ENCODE measurements at regions of chr3 and their contacts with region 1.

Region 1: DNA sequence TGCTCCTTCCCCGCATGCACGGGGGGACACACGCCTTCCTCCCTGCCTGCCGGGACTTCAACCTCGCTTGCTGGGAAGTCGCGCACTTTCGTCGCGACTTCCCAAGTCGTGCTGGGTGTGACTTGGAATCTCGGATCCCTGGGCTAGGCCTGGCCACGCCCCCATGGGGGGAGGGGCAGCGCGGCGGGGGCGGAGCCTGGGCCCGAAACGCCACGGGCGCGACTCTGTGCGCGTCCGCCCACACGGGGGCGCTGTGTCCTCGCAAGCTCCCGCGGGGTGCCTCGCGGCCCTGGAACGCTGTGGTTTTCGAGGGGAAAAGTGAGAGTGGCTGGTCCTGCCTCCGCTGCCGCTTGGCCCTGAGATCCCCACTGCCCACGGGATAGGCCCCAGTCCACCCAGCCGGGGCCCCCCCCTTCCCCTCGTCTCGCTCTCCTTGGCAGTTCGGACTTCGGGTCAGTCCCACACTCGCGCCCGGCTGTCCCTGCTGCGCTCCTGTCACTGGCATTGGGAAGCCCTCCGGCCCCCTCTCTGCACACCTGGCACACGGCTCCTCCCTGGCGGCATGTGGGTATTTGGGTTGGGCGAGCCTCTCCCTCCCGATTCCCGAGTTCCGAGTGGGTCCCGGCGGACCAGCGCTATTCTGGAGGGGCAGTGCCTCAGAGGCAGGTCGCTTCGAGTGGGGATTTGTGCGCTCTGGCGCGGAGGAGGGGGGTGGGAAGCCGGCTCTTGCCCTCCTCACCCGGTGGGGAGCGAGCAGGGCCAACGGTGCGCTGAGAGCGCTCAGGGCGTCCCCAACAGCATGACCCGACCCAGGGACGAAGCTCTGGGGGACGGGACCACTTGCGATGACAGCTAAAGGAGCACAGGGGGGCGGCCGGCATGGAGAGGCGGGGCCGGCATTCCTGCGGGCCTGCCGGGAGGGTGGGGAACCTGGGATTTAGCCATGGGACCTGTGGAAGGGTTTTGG is 23.6 kb downstream of the SEC61A1 start:
- DNase-seq: peak; percentile 86
- H3K4me3 Mint-ChIP-seq: peak overlapping the region; percentile 46
- H3K27ac Mint-ChIP-seq: no peak overlapping the region
- H3K4me1 Mint-ChIP-seq: peaks cover 20% of the 10 kb centered on the region
- H3K27me3 Mint-ChIP-seq: no peaks in the 10 kb centered on the region

Region 2: DNA sequence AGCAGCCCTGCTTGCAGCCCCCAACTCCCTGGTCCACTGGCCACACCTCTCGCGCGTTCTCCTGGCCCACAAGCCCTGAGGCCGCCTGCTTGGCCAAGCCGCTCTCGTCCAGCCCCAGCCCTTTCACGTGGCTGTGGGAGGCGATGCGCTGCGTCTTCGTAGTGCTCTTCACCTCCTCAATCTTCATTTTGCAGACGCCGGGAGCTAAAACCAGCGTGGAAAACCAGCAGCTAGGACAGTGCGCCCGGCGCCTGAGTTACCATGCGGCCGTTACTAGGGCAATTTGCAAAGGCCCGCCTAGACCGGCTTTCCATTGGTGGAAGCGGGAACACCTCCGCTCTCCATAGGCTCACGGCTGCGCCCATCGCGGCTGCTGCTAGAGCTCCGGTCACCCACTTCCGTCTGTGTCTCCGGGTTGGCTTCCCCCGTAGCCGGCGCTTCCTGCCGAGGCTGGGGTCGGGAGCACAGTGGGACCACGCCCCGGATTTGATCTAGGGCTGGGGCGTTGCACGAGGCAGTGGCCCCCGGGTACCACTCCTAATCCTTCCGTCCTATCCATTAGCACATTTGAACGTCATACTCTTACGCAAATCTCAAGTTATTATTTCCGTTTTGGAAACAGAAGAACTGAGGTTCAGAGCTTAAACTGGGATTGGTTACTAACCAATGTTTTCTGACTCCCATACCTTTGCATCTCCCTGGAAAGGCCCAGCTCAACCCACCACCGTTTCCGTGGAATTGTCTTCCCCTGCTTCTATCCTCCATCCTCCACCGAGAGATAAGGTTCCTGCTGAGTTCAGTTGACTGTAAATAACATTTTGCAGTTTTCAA is 48.0 kb after region 1 on chr3 and contains the start of gene RUVBL1:
- CTCF ChIA-PET with region 1: interaction called, 3 read pairs
- intact Hi-C with region 1: loop called (anchors 2 kb)
- DNase-seq: peak; percentile 99
- H3K4me3 Mint-ChIP-seq: peak within 1 kb of the TSS; percentile 93
- H3K27ac Mint-ChIP-seq: peak within 1 kb of the TSS; percentile 86
- H3K4me1 Mint-ChIP-seq: peaks cover 29% of the 10 kb centered on the region
- H3K27me3 Mint-ChIP-seq: no peaks in the 10 kb centered on the region
- total RNA-seq, gene RUVBL1: 71.6 to 73.1 TPM

Region 3: DNA sequence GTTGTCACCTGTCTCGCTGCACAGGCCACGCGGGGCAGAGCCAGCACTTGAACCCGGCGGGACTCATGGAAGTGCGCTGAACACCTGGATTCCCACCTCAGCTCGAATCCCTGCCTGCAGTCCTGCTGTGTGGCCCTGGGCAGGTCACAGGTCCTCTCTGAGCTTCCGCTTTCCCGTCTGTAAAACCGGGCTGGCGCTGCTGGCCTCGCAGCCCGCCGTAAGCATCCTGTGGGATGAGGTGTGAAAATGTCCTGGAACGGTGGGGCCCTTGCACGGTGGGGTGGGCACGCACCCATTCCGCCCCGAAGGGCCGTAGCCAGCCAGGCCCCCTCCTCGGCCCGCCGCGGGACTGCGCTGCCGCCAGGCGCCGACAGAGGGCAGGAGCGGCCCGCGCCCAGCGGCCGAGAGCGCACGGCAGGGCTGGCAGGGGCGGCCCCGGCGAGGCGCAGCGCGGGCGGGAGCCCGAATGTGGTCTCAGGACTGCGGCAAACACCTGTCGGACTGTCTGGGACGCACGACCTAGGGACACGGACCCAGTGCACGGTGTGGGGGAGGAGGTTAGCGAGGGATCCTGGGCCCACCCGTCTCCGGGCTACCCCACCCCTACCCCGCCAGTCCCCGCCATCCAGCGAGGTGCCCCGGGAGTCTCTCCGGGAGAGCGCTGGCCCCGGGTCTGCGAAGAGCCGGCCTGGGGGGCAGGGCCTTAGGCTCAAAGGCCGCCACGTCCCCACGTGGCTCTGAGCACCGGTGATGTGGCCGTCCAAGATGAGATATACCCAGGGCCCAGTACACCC is 350.5 kb after region 1 on chr3:
- CTCF ChIA-PET with region 1: no interaction called
- intact Hi-C with region 1: loop called (anchors 5 kb)
- DNase-seq: peak; percentile 56
- H3K4me3 Mint-ChIP-seq: no peak overlapping the region
- H3K27ac Mint-ChIP-seq: no peak overlapping the region
- H3K4me1 Mint-ChIP-seq: no peaks in the 10 kb centered on the region
- H3K27me3 Mint-ChIP-seq: peaks cover 21% of the 10 kb centered on the region

Region 4: DNA sequence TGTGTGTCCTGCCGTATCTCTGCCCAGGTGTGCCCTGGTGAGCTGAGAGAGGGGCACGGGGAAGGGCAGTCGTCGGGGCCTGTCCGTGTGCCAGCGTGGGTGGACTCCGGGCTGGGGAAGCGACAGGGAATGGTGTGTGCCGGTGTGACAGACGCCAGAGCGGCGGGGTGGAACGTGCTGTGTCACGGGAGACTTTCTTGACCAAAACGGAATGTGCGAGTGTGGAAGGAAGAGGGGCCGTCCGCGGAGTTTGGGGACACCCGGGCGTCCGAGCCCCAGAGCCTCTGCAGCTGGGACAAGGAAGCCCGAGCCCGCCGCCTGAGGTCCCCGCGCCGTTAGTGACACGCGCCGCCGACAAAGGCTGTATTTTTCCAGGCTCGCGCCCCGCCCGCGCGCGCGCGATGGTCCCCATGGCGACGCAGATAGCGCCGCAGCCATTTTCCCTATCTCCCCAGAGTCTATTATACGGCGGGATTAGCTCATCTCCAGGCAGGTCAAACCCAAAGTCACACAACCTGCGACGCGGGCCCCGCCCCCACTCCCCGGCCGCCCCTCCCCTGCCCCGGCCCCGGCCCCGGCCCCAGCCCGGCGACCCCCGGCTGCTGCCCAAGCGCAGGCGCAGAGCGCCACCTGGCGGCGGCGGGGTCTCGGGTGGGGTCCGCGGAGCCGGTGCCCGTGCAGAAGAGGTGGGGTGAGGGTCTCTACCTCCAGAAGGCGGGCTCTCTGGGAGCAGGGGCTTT is 421.8 kb after region 1 on chr3:
- CTCF ChIA-PET with region 1: no interaction called
- intact Hi-C with region 1: loop called (anchors 2 kb)
- DNase-seq: peak; percentile 74
- H3K4me3 Mint-ChIP-seq: peak overlapping the region; percentile 68
- H3K27ac Mint-ChIP-seq: no peak overlapping the region
- H3K4me1 Mint-ChIP-seq: peaks cover 3% of the 10 kb centered on the region
- H3K27me3 Mint-ChIP-seq: peaks cover 49% of the 10 kb centered on the region

Measured in activated naive CD4-positive, alpha-beta T cell treated with anti-CD3 and anti-CD28 coated beads for 36 hours (primary cell).